Uterus (tissue), 4 donors: ENCODE measurements at regions of chr6 and their contacts with region 1.

Region 1: DNA sequence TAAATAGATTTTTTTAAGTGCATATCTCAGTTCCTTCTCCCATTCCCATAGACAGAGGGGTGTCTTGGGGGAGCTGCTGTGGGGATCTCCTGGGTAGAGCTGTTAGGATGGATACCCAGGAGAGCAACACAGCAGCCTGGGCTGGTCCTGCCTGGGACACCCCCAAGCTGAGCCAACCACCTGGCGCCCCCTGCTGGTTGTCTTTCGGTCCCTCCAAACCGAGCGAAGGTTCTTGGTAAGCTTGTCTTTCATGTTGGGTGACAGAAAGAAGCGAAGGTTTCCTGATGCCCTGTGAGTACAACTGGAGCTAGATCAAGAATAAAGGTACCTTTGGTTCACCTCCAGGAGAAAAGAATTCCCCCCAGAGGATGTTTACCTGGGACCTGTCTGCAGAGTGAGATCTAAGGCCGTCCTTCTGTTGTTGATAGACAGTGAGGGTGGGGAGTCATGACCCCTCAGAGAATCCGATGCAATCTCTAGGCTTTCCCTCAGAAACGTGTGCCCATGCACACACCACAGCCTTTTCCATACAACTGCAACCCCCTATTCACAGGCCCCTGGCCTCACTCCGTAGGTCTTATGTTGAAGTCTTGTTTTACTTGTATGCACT is 50.8 kb downstream of the SNX9 start:
- DNase-seq: peak; percentile 62 to 68
- H3K4me3 ChIP-seq: no peak overlapping the region
- H3K27ac ChIP-seq: peak overlapping the region; percentile 13 to 30
- H3K4me1 ChIP-seq: no peaks in the 10 kb centered on the region
- H3K27me3 ChIP-seq: no peaks in the 10 kb centered on the region
- CTCF ChIP-seq: peak; percentile 63 to 70 (median 67)
- POLR2A ChIP-seq: no peak

Region 2: DNA sequence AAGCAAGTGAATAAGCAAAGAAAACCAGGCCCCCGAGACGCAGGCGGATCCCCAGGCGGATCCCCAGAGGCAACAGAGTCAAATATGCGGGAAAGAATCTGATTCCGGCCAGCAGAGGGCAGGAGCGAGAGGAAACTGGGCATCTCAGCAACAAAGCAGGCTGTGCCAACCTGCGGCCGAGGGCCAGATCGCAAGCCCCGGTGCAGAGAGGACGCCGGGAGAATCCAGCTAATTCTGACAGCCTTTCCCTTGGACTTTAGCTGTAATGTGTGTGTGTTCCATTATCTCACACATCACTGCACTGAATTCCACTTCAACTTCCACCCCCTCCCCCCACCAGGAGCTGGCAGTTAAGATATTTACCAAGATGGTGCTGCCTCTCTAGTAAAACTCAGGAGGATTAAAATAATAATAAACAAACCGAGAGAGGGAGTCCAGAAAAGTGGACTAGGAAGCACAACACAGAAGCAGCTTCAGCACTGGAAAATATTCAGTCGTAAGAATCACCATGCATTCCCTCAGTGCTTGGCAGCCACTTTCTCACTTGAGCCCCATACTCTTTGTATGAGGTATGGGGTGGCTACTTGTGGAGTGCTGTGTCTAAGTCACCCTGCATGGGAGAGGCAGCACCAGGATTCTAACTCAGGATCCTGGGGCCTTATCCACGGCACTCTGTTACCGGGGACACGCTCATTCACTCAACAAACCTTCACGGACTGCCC is 117.0 kb before region 1 on chr6:
- intact Hi-C with region 1: loop called (anchors 10 kb)
- DNase-seq: peak; percentile 86 to 91
- H3K4me3 ChIP-seq: no peak overlapping the region
- H3K27ac ChIP-seq: peak overlapping the region; percentile 56 to 79
- H3K4me1 ChIP-seq: peaks cover 9 to 30% of the 10 kb centered on the region in 2 donors
- H3K27me3 ChIP-seq: no peaks in the 10 kb centered on the region
- CTCF ChIP-seq: peak; percentile 81 to 86 (median 84)
- POLR2A ChIP-seq: no peak